ENCODE measurements at regions of chr20 and their contacts with region 1.

Region 1: GRCh38 chr20:5749952-5750779 is at the start of gene SHLD1:
- DNase-seq: peak; percentile 61
- ATAC-seq: peak; percentile 97
- H3K4me3 Mint-ChIP-seq: peak within 1 kb of the TSS; percentile 99
- H3K27ac Mint-ChIP-seq: peak within 1 kb of the TSS; percentile 99
- H3K4me1 Mint-ChIP-seq: peaks cover 22% of the 10 kb centered on the region
- H3K27me3 Mint-ChIP-seq: no peaks in the 10 kb centered on the region
- CTCF ChIP-seq: no peak
- total RNA-seq, gene SHLD1: 11.7 and 15.0 TPM in 2 replicates

Region 2: DNA sequence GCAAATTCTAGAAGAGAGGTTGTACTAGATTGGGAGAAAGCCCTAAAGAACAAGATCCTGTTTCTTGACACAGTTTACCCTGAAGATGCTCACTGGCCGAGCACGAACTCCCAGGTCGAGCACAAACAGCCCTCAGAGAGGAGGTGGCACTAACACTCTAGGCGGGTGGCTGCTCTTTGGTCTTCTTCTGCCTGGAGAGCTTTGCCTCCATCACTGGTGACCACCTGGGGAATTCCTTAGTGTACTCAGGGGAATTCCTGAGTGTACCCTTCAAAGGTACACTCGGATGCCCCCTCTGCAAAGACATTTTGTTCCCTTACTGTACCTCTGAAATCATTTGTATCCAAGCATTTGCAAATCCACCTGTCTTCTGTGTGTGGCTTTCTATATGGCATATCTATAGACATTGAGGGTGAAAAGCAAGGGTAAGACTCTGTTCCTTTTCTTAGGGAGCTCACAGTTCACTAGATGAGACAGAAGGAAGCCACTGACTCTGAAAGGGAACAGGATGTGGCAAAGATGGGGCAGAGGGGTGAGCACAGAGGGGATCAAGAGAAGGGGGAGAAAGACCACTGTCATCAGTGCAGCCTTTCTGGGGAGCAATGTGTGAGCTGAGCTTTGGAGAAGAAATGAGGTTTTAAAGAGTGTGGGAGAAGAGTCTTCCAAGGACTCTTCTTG is 263.6 kb before region 1 on chr20:
- CTCF ChIA-PET with region 1: no interaction called
- POLR2A ChIA-PET with region 1: no interaction called
- intact Hi-C with region 1: no loop called
- DNase-seq: no peak
- ATAC-seq: no peak
- H3K4me3 Mint-ChIP-seq: no peak overlapping the region
- H3K27ac Mint-ChIP-seq: no peak overlapping the region
- H3K4me1 Mint-ChIP-seq: no peaks in the 10 kb centered on the region
- H3K27me3 Mint-ChIP-seq: peaks cover 27% of the 10 kb centered on the region
- CTCF ChIP-seq: no peak

Region 3: GRCh38 chr20:5658912-5659345 is 91.2 kb before region 1 on chr20:
- CTCF ChIA-PET with region 1: no interaction called
- POLR2A ChIA-PET with region 1: interaction called, 9 read pairs
- intact Hi-C with region 1: loop called (anchors 2 kb)
- DNase-seq: peak; percentile 38
- ATAC-seq: peak; percentile 81
- H3K4me3 Mint-ChIP-seq: peak overlapping the region; percentile 54
- H3K27ac Mint-ChIP-seq: peak overlapping the region; percentile 88
- H3K4me1 Mint-ChIP-seq: peaks cover 54% of the 10 kb centered on the region
- H3K27me3 Mint-ChIP-seq: no peaks in the 10 kb centered on the region
- CTCF ChIP-seq: no peak

Region 4: GRCh38 chr20:5770987-5771318 is 20.8 kb after region 1 on chr20:
- CTCF ChIA-PET with region 1: interaction called, 3 read pairs
- POLR2A ChIA-PET with region 1: no interaction called
- intact Hi-C with region 1: loop called (anchors 1 kb)
- DNase-seq: no peak
- ATAC-seq: peak; percentile 88
- H3K4me3 Mint-ChIP-seq: peak overlapping the region; percentile 26
- H3K27ac Mint-ChIP-seq: peak overlapping the region; percentile 79
- H3K4me1 Mint-ChIP-seq: peaks cover 79% of the 10 kb centered on the region
- H3K27me3 Mint-ChIP-seq: no peaks in the 10 kb centered on the region
- CTCF ChIP-seq: no peak

Region 5: GRCh38 chr20:5797843-5798462 is 47.8 kb after region 1 on chr20:
- CTCF ChIA-PET with region 1: no interaction called
- POLR2A ChIA-PET with region 1: no interaction called
- intact Hi-C with region 1: loop called (anchors 1 kb)
- DNase-seq: peak; percentile 57
- ATAC-seq: peak; percentile 87
- H3K4me3 Mint-ChIP-seq: peak overlapping the region; percentile 63
- H3K27ac Mint-ChIP-seq: peak overlapping the region; percentile 100
- H3K4me1 Mint-ChIP-seq: peaks cover 29% of the 10 kb centered on the region
- H3K27me3 Mint-ChIP-seq: no peaks in the 10 kb centered on the region
- CTCF ChIP-seq: no peak

Measured in activated B cell treated with CpG ODN at 0.5 μM for 24 hours (primary cell).